ENCODE measurements at regions of chr3 and their contacts with region 1.

Region 1: GRCh38 chr3:143040261-143040879 is 39.0 kb downstream of the U2SURP start:
- DNase-seq: peak; percentile 18
- ATAC-seq: no peak
- H3K4me3 ChIP-seq: no peak overlapping the region
- H3K4me3 Mint-ChIP-seq: no peak overlapping the region
- H3K27ac ChIP-seq: no peak overlapping the region
- H3K27ac Mint-ChIP-seq: no peak overlapping the region
- H3K4me1 ChIP-seq: no peaks in the 10 kb centered on the region
- H3K4me1 Mint-ChIP-seq: peaks cover 7% of the 10 kb centered on the region
- H3K27me3 ChIP-seq: no peaks in the 10 kb centered on the region
- H3K27me3 Mint-ChIP-seq: no peaks in the 10 kb centered on the region
- CTCF ChIP-seq: peak; percentile 69

Region 2: DNA sequence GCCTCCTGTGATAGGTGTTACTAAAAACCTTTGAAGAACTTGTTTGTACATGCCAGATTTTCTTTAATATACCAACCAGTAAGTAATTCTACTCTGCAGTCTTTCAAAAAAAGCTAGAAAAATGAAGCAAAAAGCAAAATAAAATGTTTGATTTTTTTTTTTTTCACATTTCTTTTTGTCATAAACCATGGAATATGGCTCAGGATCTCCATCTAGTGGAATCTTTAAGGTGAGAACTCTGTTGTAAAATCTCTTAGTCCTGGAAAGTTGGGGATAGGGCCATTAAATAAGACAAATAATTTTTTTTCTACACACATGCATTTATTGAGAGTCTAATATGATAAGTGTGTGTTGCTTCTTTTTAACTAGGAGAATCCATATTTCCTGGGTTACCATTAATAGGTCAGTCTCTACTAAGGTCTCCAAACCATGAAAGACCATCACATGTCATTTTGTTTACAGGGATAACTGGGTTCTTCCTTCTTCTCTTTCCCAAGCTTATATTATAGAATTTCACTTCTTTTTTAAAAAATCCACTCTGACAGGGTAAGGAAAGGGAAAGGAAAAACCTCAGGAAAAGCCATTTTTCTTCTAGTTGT is 723.3 kb after region 1 on chr3:
- CTCF ChIA-PET with region 1: no interaction called
- POLR2A ChIA-PET with region 1: no interaction called
- intact Hi-C with region 1: loop called (anchors 10 kb)
- DNase-seq: no peak
- ATAC-seq: no peak
- H3K4me3 ChIP-seq: no peak overlapping the region
- H3K4me3 Mint-ChIP-seq: no peak overlapping the region
- H3K27ac ChIP-seq: no peak overlapping the region
- H3K27ac Mint-ChIP-seq: no peak overlapping the region
- H3K4me1 ChIP-seq: peaks cover 0 to 3% of the 10 kb centered on the region in 2 donors
- H3K4me1 Mint-ChIP-seq: peaks cover 3% of the 10 kb centered on the region
- H3K27me3 ChIP-seq: no peaks in the 10 kb centered on the region
- H3K27me3 Mint-ChIP-seq: no peaks in the 10 kb centered on the region
- CTCF ChIP-seq: no peak

Measured in B cell (primary cell).